Activated CD4-positive, alpha-beta T cell treated with anti-CD3 and anti-CD28 coated beads for 36 hours (primary cell): ENCODE measurements at regions of chr14 and their contacts with region 1.

Region 1: DNA sequence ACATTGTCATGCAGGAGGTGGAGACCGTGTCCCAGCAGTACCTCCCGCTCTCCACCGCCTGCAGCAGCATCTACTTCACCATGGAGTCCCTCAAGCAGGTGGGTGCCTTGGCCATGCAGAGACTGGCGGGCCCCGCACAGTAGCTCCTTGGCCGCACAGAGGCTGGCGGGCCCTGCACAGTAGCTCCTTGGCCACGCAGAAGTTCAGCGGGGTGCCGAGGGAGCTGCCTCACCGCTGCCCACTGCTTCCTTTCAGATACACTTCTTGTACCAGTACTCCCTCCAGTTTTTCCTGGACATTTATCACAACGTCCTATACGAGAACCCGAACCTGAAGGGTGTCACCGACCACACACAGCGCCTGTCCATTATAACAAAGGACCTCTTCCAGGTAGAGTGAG is 47.7 kb downstream of the HSP90AA1 start:
- DNase-seq: no peak
- ATAC-seq: no peak
- H3K4me3 Mint-ChIP-seq: no peak overlapping the region
- H3K27ac Mint-ChIP-seq: no peak overlapping the region
- H3K4me1 Mint-ChIP-seq: no peaks in the 10 kb centered on the region
- H3K27me3 Mint-ChIP-seq: no peaks in the 10 kb centered on the region

Region 2: DNA sequence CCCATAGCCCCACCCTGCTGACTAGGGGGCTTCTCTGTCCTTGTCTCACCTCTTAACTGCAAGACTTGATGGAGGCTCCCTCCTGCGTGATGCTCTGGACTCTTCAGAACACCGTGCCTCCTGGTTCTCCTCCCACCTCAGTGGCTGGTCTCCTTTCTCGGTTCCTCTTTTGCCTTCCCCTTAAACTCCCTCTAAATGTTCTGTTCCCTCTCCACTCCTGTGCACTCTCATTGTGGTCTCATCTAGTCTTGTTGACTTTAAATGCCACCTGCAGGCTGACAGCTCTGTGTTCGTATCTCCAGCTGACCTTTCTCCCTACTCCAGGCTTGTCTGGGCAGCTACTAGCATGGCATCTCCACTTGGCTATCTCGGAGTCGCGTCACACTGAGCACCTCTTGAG is 46.4 kb before region 1 on chr14:
- CTCF ChIA-PET with region 1: no interaction called
- POLR2A ChIA-PET with region 1: no interaction called
- intact Hi-C with region 1: loop called in 1 of 2 experiments (anchors 5 kb)
- DNase-seq: no peak
- ATAC-seq: no peak
- H3K4me3 Mint-ChIP-seq: no peak overlapping the region
- H3K27ac Mint-ChIP-seq: peak overlapping the region; percentile 11
- H3K4me1 Mint-ChIP-seq: peaks cover 10% of the 10 kb centered on the region
- H3K27me3 Mint-ChIP-seq: no peaks in the 10 kb centered on the region